ENCODE measurements at regions of chr12 and their contacts with region 1.

Region 1: DNA sequence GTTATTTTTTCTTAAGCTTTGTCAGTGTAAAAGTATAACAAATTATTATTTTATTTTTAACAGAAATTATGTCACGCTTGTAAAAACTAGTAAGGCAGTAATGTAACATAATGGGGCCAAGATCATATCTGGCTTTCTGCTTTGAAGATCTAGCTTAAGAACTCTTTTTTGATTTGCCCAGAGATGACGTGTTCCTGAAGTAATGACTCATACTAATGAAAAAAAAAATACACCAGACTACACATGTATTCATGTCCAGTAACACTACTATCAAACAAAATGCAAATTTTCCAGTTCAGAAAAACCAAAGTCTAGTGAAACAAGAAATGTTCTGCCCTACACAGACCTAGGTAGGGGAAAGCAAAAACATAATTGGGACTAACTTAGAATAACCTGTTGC is 432.2 kb upstream of the ATXN7L3B start:
- DNase-seq: peak; percentile 71
- ATAC-seq: peak; percentile 71
- H3K4me3 ChIP-seq: no peak overlapping the region
- H3K27ac ChIP-seq: no peak overlapping the region
- H3K4me1 ChIP-seq: peaks cover 9% of the 10 kb centered on the region; the same call in 1 of the 2 replicates
- H3K27me3 ChIP-seq: no peaks in the 10 kb centered on the region
- CTCF ChIP-seq: no peak

Region 2: GRCh38 chr12:73935817-73936216 is 169.6 kb before region 1 on chr12:
- CTCF ChIA-PET with region 1: no interaction called
- POLR2A ChIA-PET with region 1: no interaction called
- intact Hi-C with region 1: loop called (anchors 5 kb)
- DNase-seq: peak; percentile 57
- ATAC-seq: peak; percentile 78
- H3K4me3 ChIP-seq: no peak overlapping the region
- H3K27ac ChIP-seq: no peak overlapping the region
- H3K4me1 ChIP-seq: no peaks in the 10 kb centered on the region
- H3K27me3 ChIP-seq: no peaks in the 10 kb centered on the region
- CTCF ChIP-seq: peak; percentile 68

Region 3: GRCh38 chr12:74021937-74022336 is 83.5 kb before region 1 on chr12:
- CTCF ChIA-PET with region 1: no interaction called
- POLR2A ChIA-PET with region 1: no interaction called
- intact Hi-C with region 1: loop called (anchors 5 kb)
- DNase-seq: peak; percentile 84
- ATAC-seq: peak; percentile 100
- H3K4me3 ChIP-seq: no peak overlapping the region
- H3K27ac ChIP-seq: no peak overlapping the region
- H3K4me1 ChIP-seq: no peaks in the 10 kb centered on the region
- H3K27me3 ChIP-seq: no peaks in the 10 kb centered on the region
- CTCF ChIP-seq: peak; percentile 92

Region 4: GRCh38 chr12:74144396-74144795 is 39.0 kb after region 1 on chr12:
- CTCF ChIA-PET with region 1: no interaction called
- POLR2A ChIA-PET with region 1: no interaction called
- intact Hi-C with region 1: no loop called
- DNase-seq: no peak
- ATAC-seq: no peak
- H3K4me3 ChIP-seq: no peak overlapping the region
- H3K27ac ChIP-seq: no peak overlapping the region
- H3K4me1 ChIP-seq: no peaks in the 10 kb centered on the region
- H3K27me3 ChIP-seq: no peaks in the 10 kb centered on the region
- CTCF ChIP-seq: no peak

Measured in PC-3 (cell line).